Esophagus muscularis mucosa (tissue), 4 donors: ENCODE measurements at regions of chr21 and their contacts with region 1.

Region 1: GRCh38 chr21:26850108-26850643 is 5.0 kb upstream of the ADAMTS1 start:
- DNase-seq: no peak
- H3K4me3 ChIP-seq: peak overlapping the region in 2 of 4 donors; percentile 1 to 21
- H3K27ac ChIP-seq: no peak overlapping the region
- H3K4me1 ChIP-seq: peaks cover 9 to 20% (median 16%) of the 10 kb centered on the region in 4 donors
- H3K27me3 ChIP-seq: no peaks in the 10 kb centered on the region
- CTCF ChIP-seq: peak; percentile 69 to 84 (median 79)
- EP300 ChIP-seq: no peak
- POLR2A ChIP-seq: no peak

Region 2: GRCh38 chr21:26795866-26796329 is 54.3 kb before region 1 on chr21:
- intact Hi-C with region 1: no loop called
- DNase-seq: no peak
- H3K4me3 ChIP-seq: no peak overlapping the region
- H3K27ac ChIP-seq: peak overlapping the region; percentile 3 to 63 (median 52)
- H3K4me1 ChIP-seq: peaks cover 11 to 22% (median 16%) of the 10 kb centered on the region in 4 donors
- H3K27me3 ChIP-seq: no peaks in the 10 kb centered on the region
- CTCF ChIP-seq: no peak
- EP300 ChIP-seq: no peak
- POLR2A ChIP-seq: no peak

Region 3: DNA sequence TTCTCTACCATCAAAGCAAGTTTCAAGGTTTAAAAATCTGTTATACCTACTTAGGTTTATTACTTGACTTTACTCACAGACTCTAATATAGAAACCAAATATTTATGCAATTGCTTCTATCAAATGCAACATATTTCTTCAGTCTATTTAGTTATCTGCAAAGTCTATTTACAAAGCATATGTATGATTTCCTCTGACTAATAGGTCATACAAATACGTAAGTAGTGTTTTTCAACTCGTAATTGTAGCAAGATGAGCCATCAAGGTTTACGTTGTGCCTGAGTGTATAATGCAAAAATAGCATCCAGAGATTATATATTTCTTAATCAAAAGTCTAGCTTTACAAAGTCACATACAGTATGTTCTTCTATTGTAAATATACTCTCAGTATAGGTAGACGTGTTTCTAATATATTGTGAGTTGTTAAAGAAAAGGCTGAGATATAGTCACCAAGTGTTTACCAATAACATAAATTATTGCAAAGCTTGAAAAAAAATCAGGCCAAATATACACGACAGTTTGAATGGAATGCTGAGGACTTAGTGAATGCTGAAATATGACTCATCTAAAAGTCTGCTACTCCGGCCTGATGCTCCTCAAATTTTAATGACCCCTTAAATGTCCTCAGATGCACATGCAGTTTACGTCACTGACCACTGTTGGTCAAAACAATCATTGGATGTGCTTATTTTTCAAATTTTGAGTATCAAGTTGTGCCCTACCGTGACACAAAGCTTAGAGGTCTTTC is 68.3 kb after region 1 on chr21:
- intact Hi-C with region 1: no loop called
- DNase-seq: no peak
- H3K4me3 ChIP-seq: no peak overlapping the region
- H3K27ac ChIP-seq: no peak overlapping the region
- H3K4me1 ChIP-seq: peaks cover 0 to 2% (median 0%) of the 10 kb centered on the region in 4 donors
- H3K27me3 ChIP-seq: no peaks in the 10 kb centered on the region
- CTCF ChIP-seq: no peak
- EP300 ChIP-seq: no peak
- POLR2A ChIP-seq: no peak

Region 4: DNA sequence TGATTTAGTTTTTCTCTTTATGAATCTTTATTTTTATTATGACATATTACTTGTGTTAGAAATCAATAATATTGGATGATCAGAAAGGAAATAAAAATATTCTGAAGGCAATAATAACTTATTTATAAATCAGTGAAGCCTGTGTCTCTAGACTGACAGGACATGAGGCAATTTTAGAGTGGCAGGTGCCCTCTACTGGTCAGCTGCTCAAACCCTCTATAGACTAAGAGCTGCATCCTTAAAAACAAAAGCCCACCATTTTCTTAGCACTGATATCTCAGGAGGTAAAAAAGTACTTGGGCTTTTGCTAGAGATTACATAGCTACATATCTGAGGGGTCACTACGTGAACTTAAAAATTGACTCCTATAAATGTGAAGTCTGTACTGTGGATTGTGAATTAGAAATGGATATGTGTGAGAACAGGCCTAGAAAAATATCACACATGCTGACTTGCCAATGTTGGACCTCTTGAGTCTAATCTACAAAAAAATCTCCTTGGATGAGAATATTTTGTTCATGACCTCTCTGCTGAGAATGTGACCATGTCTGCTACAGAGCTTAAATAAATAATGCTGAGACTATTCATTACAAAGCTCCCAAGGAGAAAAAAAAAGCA is 714.6 kb after region 1 on chr21:
- intact Hi-C with region 1: loop called (anchors 5 kb)
- DNase-seq: no peak
- H3K4me3 ChIP-seq: no peak overlapping the region
- H3K27ac ChIP-seq: peak overlapping the region in 1 of 4 donors; percentile 24
- H3K4me1 ChIP-seq: peaks cover under 1 to 20% (median 16%) of the 10 kb centered on the region in 4 donors
- H3K27me3 ChIP-seq: no peaks in the 10 kb centered on the region
- CTCF ChIP-seq: peak; percentile 44 to 59 (median 52)
- EP300 ChIP-seq: no peak
- POLR2A ChIP-seq: no peak

Region 5: GRCh38 chr21:28063241-28064216 is 1213.4 kb after region 1 on chr21:
- intact Hi-C with region 1: loop called (anchors 5 kb)
- DNase-seq: no peak
- H3K4me3 ChIP-seq: no peak overlapping the region
- H3K27ac ChIP-seq: no peak overlapping the region
- H3K4me1 ChIP-seq: peaks cover 8 to 24% (median 15%) of the 10 kb centered on the region in 4 donors
- H3K27me3 ChIP-seq: no peaks in the 10 kb centered on the region
- CTCF ChIP-seq: no peak
- EP300 ChIP-seq: no peak
- POLR2A ChIP-seq: no peak